ENCODE measurements at regions of chr1 and their contacts with region 1.

Region 1: GRCh38 chr1:152459596-152460528 is 45.8 kb upstream of the CRNN start:
- DNase-seq: no peak
- H3K4me3 ChIP-seq: no peak overlapping the region; the same call in 1 of the 2 replicates
- H3K27ac ChIP-seq: no peak overlapping the region
- H3K27me3 ChIP-seq: no peaks in the 10 kb centered on the region
- CTCF ChIP-seq: peak; percentile 72

Region 2: GRCh38 chr1:152047730-152048402 is 412.0 kb before region 1 on chr1:
- CTCF ChIA-PET with region 1: interaction called, 33 read pairs
- POLR2A ChIA-PET with region 1: no interaction called
- DNase-seq: peak; percentile 97
- H3K4me3 ChIP-seq: peak overlapping the region; percentile 50
- H3K27ac ChIP-seq: peak overlapping the region; percentile 99
- H3K27me3 ChIP-seq: peaks cover 3% of the 10 kb centered on the region
- CTCF ChIP-seq: peak; percentile 75

Region 3: GRCh38 chr1:152141974-152142584 is 317.8 kb before region 1 on chr1:
- CTCF ChIA-PET with region 1: interaction called, 31 read pairs
- POLR2A ChIA-PET with region 1: no interaction called
- DNase-seq: no peak
- H3K4me3 ChIP-seq: no peak overlapping the region
- H3K27ac ChIP-seq: no peak overlapping the region
- H3K27me3 ChIP-seq: peaks cover 2% of the 10 kb centered on the region
- CTCF ChIP-seq: peak; percentile 77

Region 4: GRCh38 chr1:152185544-152186391 is 274.1 kb before region 1 on chr1:
- CTCF ChIA-PET with region 1: interaction called, 15 read pairs
- POLR2A ChIA-PET with region 1: no interaction called
- DNase-seq: peak; percentile 26
- H3K4me3 ChIP-seq: no peak overlapping the region
- H3K27ac ChIP-seq: no peak overlapping the region
- H3K27me3 ChIP-seq: no peaks in the 10 kb centered on the region
- CTCF ChIP-seq: peak; percentile 84

Region 5: GRCh38 chr1:152440635-152441471 is 19.0 kb before region 1 on chr1:
- CTCF ChIA-PET with region 1: interaction called, 12 read pairs
- POLR2A ChIA-PET with region 1: no interaction called
- DNase-seq: no peak
- H3K4me3 ChIP-seq: no peak overlapping the region
- H3K27ac ChIP-seq: no peak overlapping the region
- H3K27me3 ChIP-seq: no peaks in the 10 kb centered on the region
- CTCF ChIP-seq: peak; percentile 62

Region 6: DNA sequence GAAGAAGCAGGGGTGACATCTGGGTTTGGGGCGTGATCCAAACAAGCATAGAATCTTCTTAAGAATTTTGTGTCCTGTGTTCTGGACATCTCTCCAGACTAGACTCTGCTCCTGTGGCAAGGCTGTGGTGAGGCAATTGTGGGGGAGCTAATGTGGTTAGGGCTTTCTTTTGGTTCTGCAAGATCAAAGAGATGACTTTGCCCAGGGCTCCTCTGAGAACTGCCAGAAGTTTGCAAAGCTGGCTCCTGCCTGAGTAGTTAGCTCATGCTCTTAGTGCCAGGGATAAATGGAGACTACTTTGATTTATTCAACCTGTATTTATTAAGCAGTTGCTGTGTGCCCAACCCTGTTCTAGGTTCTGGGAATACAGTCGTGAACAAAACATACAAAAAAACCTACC is 11.8 kb before region 1 on chr1:
- CTCF ChIA-PET with region 1: interaction called, 12 read pairs
- POLR2A ChIA-PET with region 1: no interaction called
- DNase-seq: no peak
- H3K4me3 ChIP-seq: no peak overlapping the region
- H3K27ac ChIP-seq: no peak overlapping the region
- H3K27me3 ChIP-seq: no peaks in the 10 kb centered on the region
- CTCF ChIP-seq: no peak

Region 7: GRCh38 chr1:152473887-152474537 is 14.2 kb after region 1 on chr1:
- CTCF ChIA-PET with region 1: interaction called, 18 read pairs
- POLR2A ChIA-PET with region 1: no interaction called
- DNase-seq: no peak
- H3K4me3 ChIP-seq: no peak overlapping the region
- H3K27ac ChIP-seq: no peak overlapping the region
- H3K27me3 ChIP-seq: no peaks in the 10 kb centered on the region
- CTCF ChIP-seq: no peak

Measured in AG04450 (cell line).